H1 (cell line): ENCODE measurements at regions of chr3 and their contacts with region 1.

Region 1: DNA sequence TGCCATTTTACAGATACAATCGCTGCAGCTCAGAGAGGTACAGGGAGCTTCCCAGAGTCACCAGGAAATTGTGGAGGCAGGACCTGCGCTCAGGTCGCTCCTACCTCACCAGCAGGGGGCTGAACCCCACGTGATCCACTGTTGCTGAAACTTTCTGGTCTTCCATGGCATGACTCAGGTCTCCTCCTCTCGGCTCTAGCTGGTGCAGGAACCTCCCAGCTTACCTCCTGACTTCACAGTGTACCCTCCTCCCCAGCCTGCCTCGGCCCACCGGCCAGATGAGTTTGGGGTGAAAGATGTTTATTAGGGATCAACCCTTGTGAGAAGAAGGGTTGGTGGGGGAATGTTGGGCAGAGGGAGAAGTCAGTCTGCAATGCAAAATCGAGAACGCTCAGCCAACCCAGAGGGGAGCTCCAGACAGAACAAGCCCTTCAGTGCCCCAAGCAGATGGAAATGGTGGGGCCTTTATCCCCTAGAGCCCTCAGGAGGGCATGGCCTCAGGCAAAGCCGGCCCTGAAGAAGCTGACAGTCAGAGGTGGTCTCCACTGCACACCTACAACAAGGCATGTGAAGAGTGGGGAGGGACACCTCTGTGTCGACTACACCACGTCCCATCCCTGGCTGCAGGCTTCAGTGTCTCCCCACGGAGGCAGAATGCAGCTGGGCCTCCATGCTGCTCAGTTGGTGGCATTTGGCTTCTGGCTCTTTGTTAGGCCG is 118.6 kb upstream of the PRR20G start:
- DNase-seq: no peak
- H3K4me3 ChIP-seq: no peak overlapping the region
- H3K27ac ChIP-seq: no peak overlapping the region
- H3K4me1 ChIP-seq: peaks cover 0 to 14% (median 2%) of the 10 kb centered on the region in 4 experiments; a peak in 4 of 7 replicates
- H3K27me3 ChIP-seq: no peaks in the 10 kb centered on the region; a peak in 1 of 7 replicates
- CTCF ChIP-seq: peak in 2 of 3 experiments; percentile 33 to 38; a peak in 2 of 4 replicates
- EP300 ChIP-seq: no peak
- POLR2A ChIP-seq: no peak
- RAD21 ChIP-seq: peak in 1 of 2 experiments; percentile 2; a peak in 1 of 4 replicates

Region 2: DNA sequence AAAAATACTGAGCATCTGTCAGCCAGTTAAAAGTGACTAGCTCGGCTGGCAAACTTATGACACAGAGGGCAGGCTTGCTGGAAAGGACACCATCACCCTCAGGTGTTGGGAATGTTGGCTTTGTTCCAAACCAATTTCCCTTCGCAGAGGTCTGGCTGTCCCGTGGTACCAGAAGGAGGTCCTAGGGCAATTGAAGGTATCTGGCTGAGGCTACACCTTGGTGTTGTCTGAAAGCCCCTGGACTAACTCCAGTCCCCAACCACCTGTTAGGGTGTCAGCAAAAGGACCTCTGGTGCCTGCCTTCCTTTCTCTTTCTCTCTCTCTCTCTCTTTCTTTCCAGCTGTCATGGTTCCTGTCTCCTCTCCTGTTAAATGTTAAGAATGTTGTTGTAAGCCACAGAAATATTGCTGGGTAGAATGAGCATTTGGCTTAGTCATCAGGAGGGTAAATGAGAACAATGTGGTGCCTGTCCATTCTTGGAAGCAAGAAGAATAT is 131.1 kb before region 1 on chr3:
- CTCF ChIA-PET with region 1: no interaction called
- POLR2A ChIA-PET with region 1: no interaction called
- DNase-seq: no peak
- H3K4me3 ChIP-seq: no peak overlapping the region
- H3K27ac ChIP-seq: no peak overlapping the region
- H3K4me1 ChIP-seq: no peaks in the 10 kb centered on the region
- H3K27me3 ChIP-seq: no peaks in the 10 kb centered on the region
- CTCF ChIP-seq: no peak
- EP300 ChIP-seq: no peak
- POLR2A ChIP-seq: no peak
- RAD21 ChIP-seq: no peak

Region 3: GRCh38 chr3:127288921-127289705 is 117.4 kb before region 1 on chr3:
- CTCF ChIA-PET with region 1: no interaction called
- POLR2A ChIA-PET with region 1: no interaction called
- DNase-seq: no peak
- H3K4me3 ChIP-seq: no peak overlapping the region
- H3K27ac ChIP-seq: no peak overlapping the region
- H3K4me1 ChIP-seq: no peaks in the 10 kb centered on the region
- H3K27me3 ChIP-seq: no peaks in the 10 kb centered on the region
- CTCF ChIP-seq: peak in 2 of 3 experiments; percentile 60 to 64; a peak in 3 of 4 replicates
- EP300 ChIP-seq: no peak
- POLR2A ChIP-seq: no peak
- RAD21 ChIP-seq: peak; percentile 48

Region 4: GRCh38 chr3:127389420-127389819 is 17.0 kb before region 1 on chr3:
- CTCF ChIA-PET with region 1: interaction called, 11 read pairs
- POLR2A ChIA-PET with region 1: interaction called, 3 read pairs
- DNase-seq: no peak
- H3K4me3 ChIP-seq: no peak overlapping the region
- H3K27ac ChIP-seq: no peak overlapping the region
- H3K4me1 ChIP-seq: no peaks in the 10 kb centered on the region; a peak in 1 of 7 replicates
- H3K27me3 ChIP-seq: no peaks in the 10 kb centered on the region
- CTCF ChIP-seq: no peak
- EP300 ChIP-seq: no peak
- POLR2A ChIP-seq: no peak
- RAD21 ChIP-seq: no peak

Region 5: DNA sequence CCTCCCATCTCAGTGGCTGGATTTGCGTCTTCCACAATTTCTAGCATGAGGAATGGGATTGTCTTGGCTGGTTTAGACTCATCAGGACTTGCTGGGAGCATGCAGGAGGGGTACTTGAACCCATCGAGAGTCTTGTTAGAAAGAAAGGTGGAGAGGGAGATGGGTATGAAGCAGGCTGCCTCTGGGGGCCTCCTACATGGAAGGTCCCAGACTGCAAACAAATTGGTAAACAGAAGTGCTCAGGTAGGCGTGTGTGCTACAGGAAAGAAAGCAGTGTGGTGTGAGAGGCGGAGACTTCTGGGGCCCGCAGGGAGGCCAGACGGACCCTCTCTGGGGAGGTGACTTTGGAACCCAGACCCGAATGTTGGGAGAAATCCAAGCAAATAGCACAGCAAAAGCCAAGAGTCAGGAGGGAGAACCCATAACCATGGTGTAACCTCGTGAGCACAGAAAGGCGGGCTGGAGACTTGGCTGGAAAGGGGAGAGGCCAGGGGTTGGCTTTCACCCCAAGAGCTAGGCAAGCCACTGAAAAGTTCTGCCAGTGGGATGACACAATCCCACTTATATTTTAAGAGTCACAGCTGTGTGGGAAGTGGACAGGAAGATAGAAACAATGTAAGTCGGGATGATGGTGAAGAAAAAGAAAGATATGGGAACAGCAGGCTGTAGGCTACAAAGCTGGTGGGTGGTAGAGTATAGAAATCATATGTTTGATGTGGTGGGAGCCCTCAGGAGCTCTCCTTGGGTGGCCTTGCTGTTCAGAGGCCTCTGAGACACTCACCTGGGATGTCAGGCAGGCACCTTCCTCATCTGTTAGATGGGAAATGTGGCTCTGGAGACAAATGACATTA is 11.5 kb after region 1 on chr3:
- CTCF ChIA-PET with region 1: interaction called, 17 read pairs
- POLR2A ChIA-PET with region 1: no interaction called
- DNase-seq: peak in 1 of 2 experiments; percentile 31
- H3K4me3 ChIP-seq: no peak overlapping the region
- H3K27ac ChIP-seq: no peak overlapping the region
- H3K4me1 ChIP-seq: peaks cover 0 to 13% (median 7%) of the 10 kb centered on the region in 4 experiments; a peak in 4 of 7 replicates
- H3K27me3 ChIP-seq: no peaks in the 10 kb centered on the region
- CTCF ChIP-seq: no peak
- EP300 ChIP-seq: no peak
- POLR2A ChIP-seq: no peak
- RAD21 ChIP-seq: no peak

Region 6: DNA sequence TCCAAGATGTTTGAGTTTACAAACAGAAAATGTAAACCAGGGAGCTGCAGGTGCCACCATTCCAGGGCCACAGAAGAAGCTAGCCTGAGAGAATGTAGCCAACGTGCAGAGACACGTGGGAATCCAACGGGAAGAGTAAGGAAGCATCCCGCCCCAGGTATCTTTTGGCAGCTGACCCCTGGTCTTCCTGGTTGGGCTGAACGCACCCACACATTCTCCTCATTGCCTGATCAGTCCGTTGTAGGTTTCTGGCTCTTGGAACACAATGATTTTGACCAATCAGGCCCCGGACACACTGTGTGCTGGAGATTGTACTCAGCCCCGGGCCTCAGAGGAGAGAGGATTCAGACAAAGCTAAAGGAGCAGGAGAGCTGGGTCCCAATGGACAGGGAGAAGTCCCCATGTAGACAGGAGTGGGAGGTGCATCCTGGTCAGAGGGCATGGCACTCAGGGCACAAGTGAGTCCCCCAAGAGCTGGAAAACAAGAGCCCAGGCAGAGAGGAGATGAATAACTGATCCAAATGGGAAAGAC is 81.7 kb after region 1 on chr3:
- CTCF ChIA-PET with region 1: no interaction called
- POLR2A ChIA-PET with region 1: no interaction called
- DNase-seq: peak in 1 of 2 experiments; percentile 33
- H3K4me3 ChIP-seq: no peak overlapping the region
- H3K27ac ChIP-seq: no peak overlapping the region
- H3K4me1 ChIP-seq: peaks cover 0 to 4% (median 2%) of the 10 kb centered on the region in 4 experiments; a peak in 2 of 7 replicates
- H3K27me3 ChIP-seq: no peaks in the 10 kb centered on the region
- CTCF ChIP-seq: no peak
- EP300 ChIP-seq: no peak
- POLR2A ChIP-seq: no peak
- RAD21 ChIP-seq: no peak